Testis (tissue), 5 donors: ENCODE measurements at regions of chr22 and their contacts with region 1.

Region 1: DNA sequence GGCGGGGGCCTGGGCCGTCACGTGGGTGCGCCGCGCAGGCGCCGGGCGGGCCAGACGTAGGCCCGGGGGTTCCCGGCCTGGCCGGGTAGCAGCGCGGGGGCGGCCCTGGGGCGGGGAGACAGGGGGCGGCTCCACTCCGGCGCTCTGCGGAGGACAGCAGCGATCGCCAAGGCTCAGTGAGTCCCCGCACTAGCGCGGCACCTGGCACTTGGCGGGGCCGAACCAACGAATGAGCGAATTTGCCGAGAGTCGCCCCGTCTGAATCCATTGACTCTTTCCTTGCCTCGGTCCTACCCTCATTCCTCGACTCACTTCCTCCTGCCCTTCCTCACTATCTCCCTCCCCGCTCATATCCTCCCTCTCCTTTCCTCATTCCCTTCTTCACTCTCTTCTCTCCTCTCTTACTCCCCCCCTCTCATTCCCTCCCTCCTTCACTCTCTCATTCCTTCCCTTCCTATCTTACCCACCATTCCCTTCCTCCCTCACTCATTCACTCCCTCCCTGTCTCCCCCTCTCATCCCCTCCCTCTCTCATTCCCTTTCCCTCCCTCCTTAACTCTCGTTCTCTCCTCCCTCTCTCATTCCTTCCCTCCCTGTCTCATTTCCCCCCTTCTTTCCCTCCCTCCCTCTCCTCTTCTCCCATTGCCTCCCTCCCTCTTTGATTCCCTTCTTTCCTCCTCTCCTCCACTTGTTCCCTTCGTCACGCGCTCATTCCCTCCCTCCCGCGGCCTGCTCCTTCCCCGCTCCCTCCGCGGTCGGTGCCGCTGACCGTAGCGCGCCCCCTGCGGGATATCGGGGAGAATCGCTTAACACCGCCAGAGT is 476 bp upstream of the KLHL22 start:
- DNase-seq: peak; percentile 91
- H3K4me3 ChIP-seq: peak overlapping the region; percentile 74 to 82
- H3K27ac ChIP-seq: peak overlapping the region; percentile 92 to 97
- H3K4me1 ChIP-seq: peaks cover 4% of the 10 kb centered on the region
- H3K27me3 ChIP-seq: no peaks in the 10 kb centered on the region
- CTCF ChIP-seq: peak; percentile 76 to 91 (median 91)
- POLR2A ChIP-seq: no peak

Region 2: DNA sequence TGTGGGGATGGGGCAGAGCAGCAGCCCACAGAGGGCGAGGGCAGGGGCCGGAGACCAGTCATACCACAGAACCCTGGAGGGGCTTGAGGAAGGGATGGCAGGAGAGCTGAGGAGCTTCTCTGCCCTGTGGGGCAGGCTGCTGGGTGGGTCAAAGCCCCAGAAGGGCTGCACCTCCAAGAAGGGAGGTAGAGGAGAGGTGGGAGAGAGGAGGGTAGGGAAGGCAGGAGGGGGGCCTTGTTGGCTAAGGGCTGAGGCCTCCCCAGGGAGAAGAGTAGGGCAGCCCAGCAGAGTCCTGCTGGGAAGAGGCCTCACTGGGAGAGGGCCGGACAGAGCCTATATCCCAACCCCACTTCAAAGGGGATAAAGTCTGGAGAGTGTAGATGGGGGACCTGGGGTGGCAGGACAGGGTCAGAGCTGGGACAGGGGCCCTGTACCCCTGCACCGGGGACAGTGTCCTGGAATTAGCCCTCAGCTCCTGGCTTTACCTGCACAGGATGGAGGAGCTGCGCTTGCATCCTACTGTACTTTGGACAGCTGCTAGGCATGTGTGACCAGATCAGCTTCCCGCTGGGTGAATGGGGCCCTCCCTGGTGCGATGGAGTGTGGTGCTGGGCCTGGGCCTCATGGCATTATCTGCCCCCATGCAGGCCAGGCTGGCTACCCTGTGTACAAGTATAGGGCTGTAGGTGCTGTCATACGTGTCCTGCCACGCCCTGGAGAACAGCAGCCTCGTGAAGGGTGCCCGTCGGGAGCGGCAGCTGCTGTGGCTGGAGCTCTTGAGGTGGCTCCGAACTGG is 183.5 kb before region 1 on chr22:
- intact Hi-C with region 1: no loop called
- DNase-seq: peak; percentile 5
- H3K4me3 ChIP-seq: no peak overlapping the region
- H3K27ac ChIP-seq: no peak overlapping the region
- H3K4me1 ChIP-seq: no peaks in the 10 kb centered on the region
- H3K27me3 ChIP-seq: no peaks in the 10 kb centered on the region
- CTCF ChIP-seq: no peak
- POLR2A ChIP-seq: no peak

Region 3: DNA sequence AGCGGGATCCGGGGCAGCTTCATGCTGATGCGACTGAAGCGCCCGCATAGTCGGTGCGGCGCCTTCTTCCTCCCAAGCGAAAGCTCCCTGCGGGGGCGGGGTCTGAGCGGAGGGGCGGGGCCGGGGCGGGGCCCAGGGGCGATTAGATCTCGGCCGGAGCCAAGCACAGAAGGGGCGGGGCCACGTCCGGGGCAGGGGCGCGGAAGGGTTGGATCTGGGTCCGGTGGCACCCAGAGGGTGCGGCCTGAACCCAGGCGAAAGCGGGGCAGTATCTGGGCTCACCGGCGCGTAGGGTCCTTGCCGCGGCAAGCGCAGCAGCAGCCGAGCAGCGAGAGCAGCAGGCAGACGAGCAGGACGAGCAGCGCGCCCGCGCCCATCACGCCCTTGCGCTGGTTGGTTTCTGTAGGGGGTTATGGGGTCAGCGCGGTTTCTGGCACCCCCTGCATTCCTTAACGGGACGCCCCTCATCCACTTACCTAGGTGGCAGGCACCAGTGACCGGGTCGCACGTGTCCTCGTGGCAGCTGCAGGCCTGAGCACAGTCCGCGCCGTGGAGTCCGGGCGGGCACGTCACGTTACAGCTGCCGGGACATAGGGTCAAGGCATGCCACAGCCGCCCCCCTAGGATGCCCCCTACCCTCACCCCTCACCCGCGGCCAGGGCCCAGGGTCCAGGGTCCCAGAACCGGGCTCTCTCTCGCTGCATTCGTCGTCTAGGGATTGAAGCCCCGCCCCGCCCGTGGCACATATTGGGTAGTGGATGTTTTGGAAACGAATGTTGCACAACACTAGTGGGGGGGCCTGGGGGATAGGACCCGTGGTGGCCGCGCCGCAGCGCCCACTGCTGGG is 66.6 kb before region 1 on chr22:
- intact Hi-C with region 1: loop called (anchors 10 kb)
- DNase-seq: peak; percentile 56
- H3K4me3 ChIP-seq: peak overlapping the region; percentile 21 to 26
- H3K27ac ChIP-seq: no peak overlapping the region
- H3K4me1 ChIP-seq: peaks cover 6% of the 10 kb centered on the region
- H3K27me3 ChIP-seq: no peaks in the 10 kb centered on the region
- CTCF ChIP-seq: no peak
- POLR2A ChIP-seq: no peak

Region 4: DNA sequence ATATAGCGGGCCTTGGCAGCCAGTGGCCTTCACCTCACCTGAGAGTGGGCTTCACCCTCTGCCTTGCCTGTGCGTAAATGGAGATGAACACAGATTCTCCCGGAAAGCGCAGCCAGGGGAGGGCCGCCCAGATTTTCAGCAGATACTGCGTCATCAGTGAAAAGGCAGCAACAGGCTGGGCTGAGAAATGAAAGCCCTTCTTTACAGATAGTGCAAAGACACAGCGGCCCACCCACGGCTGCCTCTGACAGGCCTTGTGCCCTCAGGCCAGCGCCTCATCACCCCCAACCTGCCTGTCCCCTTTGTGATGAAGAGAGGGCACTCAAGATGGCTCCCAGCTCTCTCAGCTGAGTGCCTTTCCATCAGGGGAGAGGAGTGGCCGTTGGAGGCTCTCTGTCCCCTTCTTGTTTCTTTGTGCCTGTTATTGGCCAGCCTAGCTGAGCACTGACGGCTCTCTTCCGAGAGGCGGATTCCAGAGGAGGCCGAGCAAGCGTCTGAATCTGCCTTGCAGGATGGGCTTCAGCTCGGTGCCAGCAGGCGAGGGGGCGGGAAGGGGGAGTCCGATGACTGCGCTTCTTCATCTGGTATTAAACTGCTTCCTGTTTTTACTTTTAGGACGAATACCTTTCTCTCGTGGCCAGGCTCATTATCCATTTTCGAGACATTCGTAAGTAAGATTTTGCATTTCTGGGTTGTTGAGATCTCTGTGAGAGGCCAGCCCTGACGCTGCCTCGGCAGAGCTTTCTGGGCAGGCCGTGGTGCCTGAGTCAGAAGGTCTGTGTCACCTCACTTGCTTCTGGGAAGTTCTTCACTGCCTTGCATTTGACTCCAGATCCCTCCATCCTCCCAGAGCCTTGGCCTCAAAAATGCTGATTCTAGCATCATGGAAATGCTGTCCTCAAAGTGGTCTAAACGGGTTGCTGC is 55.0 kb after region 1 on chr22:
- intact Hi-C with region 1: no loop called
- DNase-seq: peak; percentile 40
- H3K4me3 ChIP-seq: no peak overlapping the region
- H3K27ac ChIP-seq: peak overlapping the region; percentile 75 to 76
- H3K4me1 ChIP-seq: peaks cover 65% of the 10 kb centered on the region
- H3K27me3 ChIP-seq: no peaks in the 10 kb centered on the region
- CTCF ChIP-seq: no peak
- POLR2A ChIP-seq: no peak

Region 5: DNA sequence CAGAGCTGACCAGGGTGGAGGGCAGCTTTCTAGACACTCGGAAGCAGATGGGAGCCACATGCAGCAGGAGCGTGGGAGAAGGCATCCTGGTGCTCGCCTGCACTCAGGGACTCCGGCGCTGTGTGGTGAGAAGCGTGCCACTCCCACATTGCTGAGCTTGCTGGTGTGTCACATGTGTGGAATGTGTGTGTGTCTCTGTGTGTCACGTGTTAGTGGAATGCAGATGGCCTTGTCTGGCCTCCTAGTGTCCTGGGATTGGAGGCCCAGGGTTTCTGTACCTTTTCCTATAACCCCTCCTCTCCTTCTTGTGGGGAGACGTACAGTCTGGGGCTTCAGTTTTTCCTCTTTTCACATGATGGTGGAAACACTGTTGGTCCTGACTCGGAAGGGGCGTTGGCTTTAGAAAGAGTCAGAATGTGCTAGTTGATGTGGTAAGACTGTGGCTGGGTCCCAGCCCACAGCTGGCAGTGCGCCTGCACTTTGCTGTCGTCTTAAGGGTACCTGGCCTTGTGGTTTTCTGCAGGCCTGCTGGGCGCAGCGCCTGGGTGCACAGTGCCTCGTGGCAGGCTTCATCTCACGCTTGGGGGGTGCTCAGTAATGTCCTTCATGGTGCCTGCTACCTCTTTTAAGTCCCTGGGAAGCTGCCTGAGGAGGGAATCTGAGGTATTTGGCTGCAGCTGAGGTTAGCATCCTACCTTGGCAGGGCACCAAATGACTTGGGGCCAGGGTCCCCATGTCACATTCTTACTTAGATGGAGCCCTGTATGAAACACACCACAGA is 73.1 kb after region 1 on chr22:
- intact Hi-C with region 1: loop called (anchors 5 kb)
- DNase-seq: peak; percentile 77
- H3K4me3 ChIP-seq: no peak overlapping the region
- H3K27ac ChIP-seq: no peak overlapping the region
- H3K4me1 ChIP-seq: peaks cover 19% of the 10 kb centered on the region
- H3K27me3 ChIP-seq: no peaks in the 10 kb centered on the region
- CTCF ChIP-seq: no peak
- POLR2A ChIP-seq: no peak

Region 6: DNA sequence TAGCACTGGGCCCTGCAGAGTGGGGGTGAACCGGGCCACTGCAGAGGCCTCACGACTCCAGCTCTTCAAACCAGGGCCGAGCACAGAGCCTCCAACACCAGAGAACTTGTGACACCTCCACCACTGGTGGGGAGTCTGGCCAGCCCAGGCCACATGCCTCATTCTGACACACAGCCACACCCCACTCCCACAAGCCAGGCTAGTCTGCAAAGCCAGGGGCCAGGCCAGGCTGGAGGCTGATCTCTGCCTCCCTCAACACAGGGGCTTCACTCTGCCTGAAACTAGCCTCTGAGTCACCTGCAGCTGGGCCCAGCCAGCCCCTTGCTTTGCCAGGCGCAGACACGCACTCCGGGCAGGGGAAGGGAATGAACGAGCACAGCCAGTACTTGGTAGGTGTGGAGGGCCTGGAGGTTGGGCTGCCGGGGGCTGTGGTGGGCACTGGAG is 114.2 kb after region 1 on chr22:
- intact Hi-C with region 1: no loop called
- DNase-seq: no peak
- H3K4me3 ChIP-seq: no peak overlapping the region
- H3K27ac ChIP-seq: no peak overlapping the region
- H3K4me1 ChIP-seq: no peaks in the 10 kb centered on the region
- H3K27me3 ChIP-seq: no peaks in the 10 kb centered on the region
- CTCF ChIP-seq: no peak
- POLR2A ChIP-seq: no peak